Natural killer cell (primary cell): ENCODE measurements at regions of chr7 and their contacts with region 1.

Region 1: GRCh38 chr7:92621026-92621540 is 30.9 kb upstream of the FAM133B start:
- DNase-seq: peak; percentile 59 to 92
- ATAC-seq: peak; percentile 83 to 93 (median 86)
- H3K4me3 ChIP-seq: no peak overlapping the region
- H3K4me3 Mint-ChIP-seq: peak overlapping the region; percentile 56
- H3K27ac ChIP-seq: peak overlapping the region; percentile 24
- H3K27ac Mint-ChIP-seq: peak overlapping the region; percentile 84 to 95
- H3K4me1 ChIP-seq: peaks cover 7% of the 10 kb centered on the region
- H3K4me1 Mint-ChIP-seq: peaks cover 40 to 41% of the 10 kb centered on the region in 2 donors
- H3K27me3 ChIP-seq: no peaks in the 10 kb centered on the region
- H3K27me3 Mint-ChIP-seq: no peaks in the 10 kb centered on the region
- CTCF ChIP-seq: peak; percentile 88

Region 2: DNA sequence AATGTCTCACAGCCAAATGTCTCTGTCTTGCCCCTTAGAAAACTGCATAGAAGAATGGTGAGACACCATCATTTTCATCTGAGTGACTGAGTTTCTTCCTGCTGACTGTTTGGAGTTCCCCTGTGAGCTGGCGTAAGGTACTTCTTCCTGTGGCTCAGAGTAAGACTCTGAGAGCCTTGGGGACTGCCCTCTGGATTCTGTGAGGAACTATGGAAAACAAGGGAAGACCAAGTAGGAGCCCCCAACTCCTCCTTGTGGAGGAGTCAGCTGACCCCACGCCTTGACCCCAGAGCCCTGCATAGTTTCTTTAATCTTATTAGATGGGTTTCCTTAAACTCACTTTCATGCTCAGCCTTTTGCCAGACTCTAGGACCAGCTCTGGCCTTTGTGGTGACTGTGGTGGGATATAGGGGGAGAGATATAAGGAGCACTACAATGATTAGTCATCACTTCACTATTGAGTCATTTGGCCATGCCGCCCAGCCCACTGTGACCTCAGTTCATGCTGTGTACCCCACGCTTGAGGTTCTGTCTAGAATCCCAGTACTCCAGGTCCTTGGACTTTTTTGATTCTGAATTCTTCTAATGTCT is 20.9 kb after region 1 on chr7:
- intact Hi-C with region 1: loop called (anchors 1 kb)
- DNase-seq: peak; percentile 40 to 68
- ATAC-seq: peak; percentile 82 to 88 (median 86)
- H3K4me3 ChIP-seq: no peak overlapping the region
- H3K4me3 Mint-ChIP-seq: peak overlapping the region; percentile 13
- H3K27ac ChIP-seq: peak overlapping the region; percentile 41
- H3K27ac Mint-ChIP-seq: peak overlapping the region; percentile 88 to 93
- H3K4me1 ChIP-seq: peaks cover 23% of the 10 kb centered on the region
- H3K4me1 Mint-ChIP-seq: peaks cover 37 to 54% of the 10 kb centered on the region in 2 donors
- H3K27me3 ChIP-seq: no peaks in the 10 kb centered on the region
- H3K27me3 Mint-ChIP-seq: no peaks in the 10 kb centered on the region
- CTCF ChIP-seq: no peak

Region 3: DNA sequence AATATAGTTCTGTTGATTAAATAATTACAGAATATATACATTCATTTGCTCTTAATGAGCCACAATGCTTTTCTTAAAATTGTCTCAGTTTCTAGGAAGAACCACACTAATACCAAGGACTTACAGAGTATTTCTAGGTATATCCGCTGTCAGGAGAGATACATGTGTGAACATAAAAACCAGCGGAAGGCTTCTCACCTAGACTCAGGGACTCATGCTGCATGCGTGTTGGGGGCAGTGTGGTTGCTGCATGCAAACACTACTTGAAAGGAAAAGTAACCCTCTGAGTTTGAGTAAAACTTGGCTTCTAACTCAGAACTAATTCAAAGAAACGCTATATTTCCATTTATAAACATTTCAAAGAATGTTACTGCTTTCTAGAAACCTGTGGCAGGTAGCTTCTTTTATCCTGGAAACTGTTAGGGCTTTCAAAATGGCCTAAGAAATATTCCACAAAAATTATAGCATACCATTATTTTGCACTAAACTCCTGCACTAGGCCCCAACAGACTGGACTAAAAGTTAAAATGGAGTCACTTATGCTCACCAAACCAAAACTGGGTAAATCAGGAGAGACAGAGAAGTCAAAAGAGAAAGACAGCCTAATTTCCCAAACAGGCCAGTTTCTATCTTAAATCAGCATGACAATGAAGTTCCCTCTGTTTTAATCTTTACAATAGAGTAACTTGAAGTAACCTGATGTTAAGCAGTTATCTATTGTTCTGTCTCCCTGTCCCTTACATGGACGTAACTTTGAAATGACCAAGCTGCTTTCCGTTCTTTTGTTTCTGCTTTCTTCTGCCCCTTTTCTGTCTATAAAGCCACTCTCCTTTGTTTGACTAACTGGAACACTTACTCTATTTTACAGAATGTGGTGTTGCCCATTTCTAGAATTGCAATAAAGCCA is 64.3 kb after region 1 on chr7:
- intact Hi-C with region 1: loop called (anchors 2 kb)
- DNase-seq: peak; percentile 51 to 76
- ATAC-seq: peak; percentile 94 to 98 (median 95)
- H3K4me3 ChIP-seq: no peak overlapping the region
- H3K4me3 Mint-ChIP-seq: peak overlapping the region; percentile 79
- H3K27ac ChIP-seq: peak overlapping the region; percentile 88
- H3K27ac Mint-ChIP-seq: peak overlapping the region; percentile 92 to 96
- H3K4me1 ChIP-seq: peaks cover 20% of the 10 kb centered on the region
- H3K4me1 Mint-ChIP-seq: peaks cover 85 to 91% of the 10 kb centered on the region in 2 donors
- H3K27me3 ChIP-seq: no peaks in the 10 kb centered on the region
- H3K27me3 Mint-ChIP-seq: no peaks in the 10 kb centered on the region
- CTCF ChIP-seq: no peak

Region 4: DNA sequence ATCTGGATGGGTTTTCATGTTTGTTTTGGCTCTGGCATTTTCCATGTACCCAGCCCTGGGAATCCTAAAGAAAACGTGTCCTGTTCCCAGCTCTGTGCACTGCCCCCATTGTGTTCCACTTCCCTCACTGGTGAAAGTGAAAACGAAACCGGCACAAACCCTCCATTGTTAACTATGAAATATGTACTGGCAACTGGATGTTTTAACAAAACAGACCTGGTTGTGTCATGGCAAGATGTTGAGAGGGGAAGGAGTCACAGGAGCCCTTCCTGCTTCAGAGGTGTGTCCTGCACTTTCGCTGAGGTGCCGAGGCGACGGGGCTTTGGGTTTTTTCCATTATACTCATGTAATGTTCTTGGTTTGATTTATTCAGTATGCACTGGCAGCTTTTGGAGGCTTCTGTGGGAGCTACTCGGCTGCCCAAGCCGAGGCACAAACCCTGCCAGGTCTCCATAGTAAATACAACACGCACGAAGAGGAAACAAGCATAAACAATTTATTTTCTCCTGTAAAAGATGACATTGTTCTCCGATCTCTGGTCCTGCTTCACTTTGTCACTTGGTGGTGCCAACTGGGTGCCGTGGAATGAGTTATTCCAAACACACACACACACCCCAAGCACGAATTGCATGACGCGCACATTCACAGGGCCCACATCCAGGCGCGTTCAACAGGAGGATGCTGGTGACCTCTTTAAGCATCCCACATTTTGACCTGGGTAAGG is 97.1 kb after region 1 on chr7:
- intact Hi-C with region 1: loop called (anchors 1 kb)
- DNase-seq: peak; percentile 44 to 71
- ATAC-seq: peak; percentile 89 to 92 (median 91)
- H3K4me3 ChIP-seq: peak overlapping the region; percentile 28
- H3K4me3 Mint-ChIP-seq: peak overlapping the region; percentile 78
- H3K27ac ChIP-seq: peak overlapping the region; percentile 82
- H3K27ac Mint-ChIP-seq: peak overlapping the region; percentile 84
- H3K4me1 ChIP-seq: peaks cover 13% of the 10 kb centered on the region
- H3K4me1 Mint-ChIP-seq: peaks cover 25 to 47% of the 10 kb centered on the region in 2 donors
- H3K27me3 ChIP-seq: no peaks in the 10 kb centered on the region
- H3K27me3 Mint-ChIP-seq: no peaks in the 10 kb centered on the region
- CTCF ChIP-seq: no peak

Region 5: DNA sequence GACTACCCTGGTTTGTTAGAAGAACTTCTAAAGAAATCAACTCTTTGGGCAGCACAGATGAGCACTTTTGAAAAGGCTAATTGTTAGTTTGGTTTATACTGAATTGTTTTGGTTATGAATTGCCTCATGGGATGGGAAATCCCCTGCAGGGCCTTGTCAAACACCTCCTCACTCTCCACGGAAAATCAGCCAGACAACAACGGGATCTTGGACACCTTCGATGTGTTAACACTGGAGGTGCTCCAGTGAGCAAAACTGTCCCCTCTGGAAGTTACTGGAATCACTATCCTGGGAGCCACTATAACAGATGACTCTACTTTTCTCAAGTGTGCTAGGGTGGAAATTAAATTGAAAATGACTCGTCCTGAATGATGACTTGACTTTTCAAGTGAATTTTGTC is 176.6 kb after region 1 on chr7:
- intact Hi-C with region 1: no loop called
- DNase-seq: peak in 1 of 2 donors; percentile 40
- ATAC-seq: no peak
- H3K4me3 ChIP-seq: no peak overlapping the region
- H3K4me3 Mint-ChIP-seq: no peak overlapping the region
- H3K27ac ChIP-seq: no peak overlapping the region
- H3K27ac Mint-ChIP-seq: no peak overlapping the region
- H3K4me1 ChIP-seq: no peaks in the 10 kb centered on the region
- H3K4me1 Mint-ChIP-seq: peaks cover 14 to 16% of the 10 kb centered on the region in 2 donors
- H3K27me3 ChIP-seq: no peaks in the 10 kb centered on the region
- H3K27me3 Mint-ChIP-seq: no peaks in the 10 kb centered on the region
- CTCF ChIP-seq: no peak

Region 6: DNA sequence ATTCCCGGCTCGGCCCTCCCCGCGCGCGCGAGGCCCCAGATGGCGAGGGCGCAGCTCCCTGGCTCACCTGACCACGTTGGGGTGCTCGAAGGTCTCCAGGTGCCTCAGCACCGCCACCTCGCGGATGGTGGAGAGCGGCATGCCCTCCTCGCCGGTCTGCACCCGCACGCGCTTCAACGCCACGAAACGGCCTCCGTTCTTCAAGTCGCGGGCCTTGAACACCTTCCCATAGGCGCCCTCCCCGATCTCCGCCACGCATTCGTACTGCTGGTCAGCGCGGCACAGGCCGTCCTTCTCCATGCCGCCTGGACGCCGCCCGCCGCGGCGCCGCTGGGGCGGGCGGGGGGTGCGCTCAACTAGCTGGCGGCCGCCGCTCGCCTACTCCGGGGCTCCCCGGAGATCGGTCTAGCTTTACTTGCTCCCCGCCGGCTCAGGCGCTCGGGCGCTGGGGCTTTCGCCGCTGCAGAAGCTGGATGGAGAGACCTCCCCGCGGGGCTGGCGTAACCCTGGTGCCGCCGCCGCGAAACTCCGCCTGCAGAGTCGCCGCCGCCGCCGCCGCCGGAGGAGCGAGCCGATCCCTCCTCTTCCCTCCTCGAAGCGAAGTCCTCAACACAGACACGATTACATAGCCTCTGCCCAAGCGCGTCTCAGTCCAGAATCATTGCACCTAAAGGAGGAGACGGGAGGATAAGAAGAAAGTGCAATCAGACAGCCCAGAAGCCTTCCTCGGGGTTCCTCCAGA is 212.1 kb after region 1 on chr7:
- intact Hi-C with region 1: loop called (anchors 1 kb)
- DNase-seq: peak; percentile 83 to 94
- ATAC-seq: peak; percentile 69 to 86 (median 80)
- H3K4me3 ChIP-seq: peak overlapping the region; percentile 55
- H3K4me3 Mint-ChIP-seq: peak overlapping the region; percentile 100
- H3K27ac ChIP-seq: peak overlapping the region; percentile 70
- H3K27ac Mint-ChIP-seq: peak overlapping the region; percentile 88 to 94
- H3K4me1 ChIP-seq: peaks cover 18% of the 10 kb centered on the region
- H3K4me1 Mint-ChIP-seq: peaks cover 59 to 67% of the 10 kb centered on the region in 2 donors
- H3K27me3 ChIP-seq: no peaks in the 10 kb centered on the region
- H3K27me3 Mint-ChIP-seq: no peaks in the 10 kb centered on the region
- CTCF ChIP-seq: peak; percentile 88

Region 7: GRCh38 chr7:92904292-92905131 is 283.4 kb after region 1 on chr7:
- intact Hi-C with region 1: loop called (anchors 5 kb)
- DNase-seq: peak; percentile 65 to 80
- ATAC-seq: peak; percentile 98 to 100 (median 99)
- H3K4me3 ChIP-seq: no peak overlapping the region
- H3K4me3 Mint-ChIP-seq: no peak overlapping the region
- H3K27ac ChIP-seq: no peak overlapping the region
- H3K27ac Mint-ChIP-seq: peak overlapping the region; percentile 62 to 64
- H3K4me1 ChIP-seq: peaks cover 9% of the 10 kb centered on the region
- H3K4me1 Mint-ChIP-seq: peaks cover 18 to 19% of the 10 kb centered on the region in 2 donors
- H3K27me3 ChIP-seq: no peaks in the 10 kb centered on the region
- H3K27me3 Mint-ChIP-seq: peaks cover 0 to 3% of the 10 kb centered on the region in 2 donors
- CTCF ChIP-seq: no peak

Region 8: DNA sequence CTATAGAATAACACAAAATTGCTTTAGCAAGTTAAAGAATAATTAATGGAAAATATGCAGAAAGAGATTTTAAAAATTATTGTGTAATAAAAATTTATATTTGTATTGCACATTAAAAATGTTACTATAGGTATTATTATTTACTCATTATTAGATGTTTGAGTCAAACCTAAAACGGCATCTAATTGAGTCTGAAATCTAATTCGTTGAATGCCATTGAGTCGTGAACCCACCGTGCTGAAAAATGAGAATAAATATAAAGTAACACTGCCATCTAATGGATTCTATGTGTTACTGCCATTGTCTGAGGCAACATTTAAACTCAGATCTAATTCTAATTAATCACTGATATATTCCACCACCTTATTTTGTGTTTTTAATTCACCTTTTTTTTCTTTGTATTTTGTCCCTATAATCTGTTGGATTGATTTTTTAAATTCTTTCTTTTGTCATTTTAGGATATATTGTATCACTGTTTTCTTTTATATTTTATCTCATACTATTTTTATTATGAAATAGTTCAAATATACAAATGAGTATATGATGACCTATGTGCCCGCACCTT is 434.5 kb after region 1 on chr7:
- intact Hi-C with region 1: loop called (anchors 1 kb)
- DNase-seq: peak in 1 of 2 donors; percentile 65
- ATAC-seq: peak; percentile 75 to 79 (median 76)
- H3K4me3 ChIP-seq: no peak overlapping the region
- H3K4me3 Mint-ChIP-seq: no peak overlapping the region
- H3K27ac ChIP-seq: no peak overlapping the region
- H3K27ac Mint-ChIP-seq: no peak overlapping the region
- H3K4me1 ChIP-seq: no peaks in the 10 kb centered on the region
- H3K4me1 Mint-ChIP-seq: no peaks in the 10 kb centered on the region
- H3K27me3 ChIP-seq: no peaks in the 10 kb centered on the region
- H3K27me3 Mint-ChIP-seq: peaks cover 2 to 7% of the 10 kb centered on the region in 2 donors
- CTCF ChIP-seq: peak; percentile 93